Upper lobe of right lung (tissue), 1 donor: ENCODE measurements at regions of chr3 and their contacts with region 1.

Region 1: DNA sequence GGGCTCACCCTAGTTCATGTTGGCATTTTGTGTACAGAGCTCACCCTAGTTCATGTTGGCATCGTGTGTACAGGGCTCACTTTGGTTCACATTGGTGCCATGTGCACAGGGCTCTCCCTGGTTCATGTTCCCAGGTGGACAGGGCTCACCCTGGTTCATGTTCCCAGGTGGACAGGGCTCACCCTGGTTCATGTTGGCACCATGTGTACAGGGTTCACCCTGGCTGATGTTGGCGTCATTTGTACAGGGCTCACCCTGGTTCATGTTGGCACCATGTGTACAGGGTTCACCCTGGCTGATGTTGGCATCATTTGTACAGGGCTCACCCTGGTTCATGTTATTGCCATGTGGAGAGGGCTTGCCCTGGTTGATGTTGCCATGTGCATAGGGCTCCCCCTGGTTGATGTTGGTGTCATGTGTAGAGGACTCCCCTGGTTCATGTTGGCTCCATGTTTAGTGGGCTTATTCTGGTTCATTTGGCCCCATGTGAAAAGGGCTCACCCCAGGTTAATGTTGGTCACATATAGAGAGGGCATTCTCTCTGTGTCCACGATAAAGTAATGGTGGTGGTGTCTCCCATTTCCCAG is 31.7 kb upstream of the NR2C2 start:
- DNase-seq: peak; percentile 37
- ATAC-seq: peak; percentile 6
- H3K4me3 ChIP-seq: no peak overlapping the region
- H3K27ac ChIP-seq: no peak overlapping the region
- H3K4me1 ChIP-seq: no peaks in the 10 kb centered on the region
- H3K27me3 ChIP-seq: no peaks in the 10 kb centered on the region
- CTCF ChIP-seq: no peak

Region 2: DNA sequence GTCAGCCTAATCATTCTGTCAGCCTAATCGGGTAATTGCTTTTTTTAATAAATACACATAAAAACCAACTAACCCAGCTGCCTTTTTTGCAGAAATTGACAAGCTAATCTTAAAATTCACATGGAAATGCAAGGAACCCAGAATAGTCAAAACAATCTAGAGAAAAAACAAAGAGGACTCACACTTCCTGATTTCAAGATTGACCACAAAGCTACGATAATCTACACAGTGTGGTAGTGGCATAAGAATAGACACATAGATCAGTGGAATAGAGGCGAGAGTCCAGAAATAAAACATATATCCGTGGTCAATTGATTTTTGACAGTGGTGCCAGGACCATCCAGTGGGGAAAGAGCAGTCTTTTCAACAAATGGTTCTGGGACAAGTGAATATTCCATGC is 243.1 kb before region 1 on chr3:
- intact Hi-C with region 1: loop called (anchors 5 kb)
- DNase-seq: no peak
- ATAC-seq: no peak
- H3K4me3 ChIP-seq: no peak overlapping the region
- H3K27ac ChIP-seq: no peak overlapping the region
- H3K4me1 ChIP-seq: no peaks in the 10 kb centered on the region
- H3K27me3 ChIP-seq: no peaks in the 10 kb centered on the region
- CTCF ChIP-seq: no peak